ENCODE measurements at regions of chr17 and their contacts with region 1.

Region 1: GRCh38 chr17:1347589-1348323 is 52.3 kb downstream of the YWHAE start:
- DNase-seq: peak; percentile 67
- H3K4me3 ChIP-seq: peak overlapping the region in 1 of 3 experiments; percentile 7
- H3K27ac ChIP-seq: peak overlapping the region; percentile 46
- H3K4me1 ChIP-seq: peaks cover 11% of the 10 kb centered on the region
- H3K27me3 ChIP-seq: no peaks in the 10 kb centered on the region
- CTCF ChIP-seq: no peak
- POLR2A ChIP-seq: no peak

Region 2: GRCh38 chr17:1323336-1323735 is 24.4 kb before region 1 on chr17:
- CTCF ChIA-PET with region 1: no interaction called
- POLR2A ChIA-PET with region 1: no interaction called
- dilution Hi-C with region 1: no loop called
- intact Hi-C with region 1: no loop called
- DNase-seq: no peak
- H3K4me3 ChIP-seq: no peak overlapping the region
- H3K27ac ChIP-seq: no peak overlapping the region
- H3K4me1 ChIP-seq: no peaks in the 10 kb centered on the region
- H3K27me3 ChIP-seq: no peaks in the 10 kb centered on the region
- CTCF ChIP-seq: no peak
- POLR2A ChIP-seq: no peak

Region 3: DNA sequence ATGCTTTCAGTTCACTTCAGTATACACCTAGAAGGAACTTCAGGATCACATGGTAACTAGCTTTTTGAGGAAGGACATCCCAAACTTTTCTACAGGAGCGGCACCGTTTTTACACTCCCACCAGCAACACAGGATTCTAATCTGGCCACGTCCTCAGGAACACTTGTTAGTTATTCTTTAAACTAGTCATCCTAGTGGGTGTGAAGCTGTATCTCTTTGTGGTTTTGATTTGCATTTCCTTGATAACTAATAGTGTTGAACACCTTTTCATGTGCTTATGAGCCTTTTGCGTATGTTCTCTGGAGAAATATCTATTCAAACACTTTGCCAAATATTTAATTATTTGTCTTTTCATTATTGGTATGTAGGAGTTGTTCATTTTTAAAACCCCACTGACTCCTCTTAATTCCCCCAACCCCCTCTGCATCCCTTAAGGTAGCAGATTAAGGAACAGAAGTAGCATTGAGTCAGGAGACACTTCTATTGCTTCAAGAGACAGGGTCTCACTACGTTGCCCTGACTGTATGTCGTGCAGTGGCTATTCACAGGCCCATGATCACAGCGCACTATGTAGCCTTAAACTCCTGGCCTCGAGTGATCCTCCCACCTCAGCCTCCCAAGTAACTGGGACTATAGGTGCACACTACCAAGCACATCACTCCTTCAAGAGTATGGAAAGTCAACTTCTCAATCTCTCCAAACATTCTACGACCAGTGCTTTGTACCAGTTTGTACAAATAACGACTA is 26.8 kb after region 1 on chr17:
- CTCF ChIA-PET with region 1: no interaction called
- POLR2A ChIA-PET with region 1: no interaction called
- dilution Hi-C with region 1: no loop called
- intact Hi-C with region 1: loop called (anchors 1 kb)
- DNase-seq: no peak
- H3K4me3 ChIP-seq: no peak overlapping the region
- H3K27ac ChIP-seq: no peak overlapping the region
- H3K4me1 ChIP-seq: no peaks in the 10 kb centered on the region
- H3K27me3 ChIP-seq: no peaks in the 10 kb centered on the region
- CTCF ChIP-seq: no peak
- POLR2A ChIP-seq: no peak

Region 4: GRCh38 chr17:1764284-1764683 is 416.5 kb after region 1 on chr17:
- CTCF ChIA-PET with region 1: no interaction called
- POLR2A ChIA-PET with region 1: no interaction called
- dilution Hi-C with region 1: no loop called
- intact Hi-C with region 1: no loop called
- DNase-seq: peak; percentile 89
- H3K4me3 ChIP-seq: no peak overlapping the region
- H3K27ac ChIP-seq: no peak overlapping the region
- H3K4me1 ChIP-seq: peaks cover 4% of the 10 kb centered on the region
- H3K27me3 ChIP-seq: no peaks in the 10 kb centered on the region
- CTCF ChIP-seq: no peak
- POLR2A ChIP-seq: no peak

Measured in endothelial cell of umbilical vein (primary cell).